ENCODE measurements at regions of chr4 and their contacts with region 1.

Region 1: GRCh38 chr4:112082954-112083586 is 62.2 kb upstream of the FAM241A start:
- DNase-seq: peak; percentile 27 to 98
- H3K4me3 ChIP-seq: peak overlapping the region; percentile 30; the same call in 1 of the 2 replicates
- H3K27ac ChIP-seq: peak overlapping the region; percentile 97
- H3K4me1 ChIP-seq: peaks cover 52% of the 10 kb centered on the region
- H3K27me3 ChIP-seq: no peaks in the 10 kb centered on the region
- CTCF ChIP-seq: no peak

Region 2: GRCh38 chr4:111778543-111778942 is 304.5 kb before region 1 on chr4:
- CTCF ChIA-PET with region 1: no interaction called
- POLR2A ChIA-PET with region 1: interaction called, 11 read pairs
- intact Hi-C with region 1: no loop called
- DNase-seq: no peak
- H3K4me3 ChIP-seq: no peak overlapping the region
- H3K27ac ChIP-seq: no peak overlapping the region
- H3K4me1 ChIP-seq: peaks cover 18% of the 10 kb centered on the region
- H3K27me3 ChIP-seq: no peaks in the 10 kb centered on the region
- CTCF ChIP-seq: no peak; the same call in 1 of the 2 replicates

Region 3: DNA sequence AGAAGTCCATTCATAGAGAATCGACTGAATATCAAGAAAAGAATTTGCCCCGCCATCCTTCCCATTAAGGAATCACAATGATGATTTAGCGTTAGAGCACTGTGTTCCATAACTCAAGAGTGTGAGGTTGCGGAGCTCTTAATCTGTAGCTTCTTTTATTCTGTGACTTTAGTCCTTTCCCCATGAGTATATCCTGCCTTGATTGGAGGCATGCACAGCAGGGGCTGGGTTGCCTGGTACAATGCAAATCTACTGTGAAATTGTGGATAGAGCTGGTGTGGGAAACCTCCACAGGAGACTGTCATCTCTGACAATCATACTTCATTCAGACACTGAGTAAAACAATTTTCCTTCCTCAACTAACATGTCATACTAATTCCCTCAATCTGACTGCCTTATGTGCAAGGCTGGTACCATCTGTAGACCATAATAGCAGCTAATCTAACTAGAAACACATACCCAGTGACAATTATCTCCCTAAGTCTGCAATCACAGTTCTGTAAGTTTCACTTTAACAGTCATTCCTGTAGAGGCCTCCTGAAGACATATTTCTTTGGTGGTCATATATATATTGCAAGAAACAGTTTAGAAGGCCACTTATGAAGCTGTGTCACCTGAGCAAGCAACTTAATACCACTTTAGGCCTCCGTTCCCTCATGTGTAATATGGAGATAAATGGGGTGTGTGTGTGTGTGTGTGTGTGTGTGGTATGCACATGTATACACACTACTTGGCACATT is 293.0 kb before region 1 on chr4:
- CTCF ChIA-PET with region 1: no interaction called
- POLR2A ChIA-PET with region 1: no interaction called
- intact Hi-C with region 1: no loop called
- DNase-seq: no peak
- H3K4me3 ChIP-seq: no peak overlapping the region
- H3K27ac ChIP-seq: no peak overlapping the region
- H3K4me1 ChIP-seq: no peaks in the 10 kb centered on the region
- H3K27me3 ChIP-seq: no peaks in the 10 kb centered on the region
- CTCF ChIP-seq: no peak

Region 4: GRCh38 chr4:112119353-112119783 is 36.3 kb after region 1 on chr4:
- CTCF ChIA-PET with region 1: no interaction called
- POLR2A ChIA-PET with region 1: interaction called, 17 read pairs
- intact Hi-C with region 1: no loop called
- DNase-seq: no peak
- H3K4me3 ChIP-seq: no peak overlapping the region
- H3K27ac ChIP-seq: no peak overlapping the region
- H3K4me1 ChIP-seq: peaks cover 15% of the 10 kb centered on the region
- H3K27me3 ChIP-seq: no peaks in the 10 kb centered on the region
- CTCF ChIP-seq: no peak